Dorsolateral prefrontal cortex (tissue), 120 donors: ENCODE measurements at regions of chr9 and their contacts with region 1.

Region 1: GRCh38 chr9:85040821-85041465 is 371.4 kb downstream of the NTRK2 start:
- DNase-seq: peak; percentile 38 to 94 (median 85)
- H3K4me3 ChIP-seq: peak overlapping the region in 58 of 59 donors; percentile 2 to 64 (median 41)
- H3K27ac ChIP-seq: peak overlapping the region; percentile 86 to 100 (median 98)
- H3K27me3 ChIP-seq: no peaks in the 10 kb centered on the region
- CTCF ChIP-seq: peak in 24 of 56 donors; percentile 6 to 36 (median 18)

Region 2: GRCh38 chr9:84947363-84947972 is 93.5 kb before region 1 on chr9:
- intact Hi-C with region 1: loop called in 1 of 2 experiments (anchors 5 kb)
- DNase-seq: peak in 2 of 10 donors; percentile 40 to 48
- H3K4me3 ChIP-seq: no peak overlapping the region
- H3K27ac ChIP-seq: peak overlapping the region in 46 of 59 donors; percentile 1 to 82 (median 54)
- H3K27me3 ChIP-seq: no peaks in the 10 kb centered on the region
- CTCF ChIP-seq: no peak

Region 3: DNA sequence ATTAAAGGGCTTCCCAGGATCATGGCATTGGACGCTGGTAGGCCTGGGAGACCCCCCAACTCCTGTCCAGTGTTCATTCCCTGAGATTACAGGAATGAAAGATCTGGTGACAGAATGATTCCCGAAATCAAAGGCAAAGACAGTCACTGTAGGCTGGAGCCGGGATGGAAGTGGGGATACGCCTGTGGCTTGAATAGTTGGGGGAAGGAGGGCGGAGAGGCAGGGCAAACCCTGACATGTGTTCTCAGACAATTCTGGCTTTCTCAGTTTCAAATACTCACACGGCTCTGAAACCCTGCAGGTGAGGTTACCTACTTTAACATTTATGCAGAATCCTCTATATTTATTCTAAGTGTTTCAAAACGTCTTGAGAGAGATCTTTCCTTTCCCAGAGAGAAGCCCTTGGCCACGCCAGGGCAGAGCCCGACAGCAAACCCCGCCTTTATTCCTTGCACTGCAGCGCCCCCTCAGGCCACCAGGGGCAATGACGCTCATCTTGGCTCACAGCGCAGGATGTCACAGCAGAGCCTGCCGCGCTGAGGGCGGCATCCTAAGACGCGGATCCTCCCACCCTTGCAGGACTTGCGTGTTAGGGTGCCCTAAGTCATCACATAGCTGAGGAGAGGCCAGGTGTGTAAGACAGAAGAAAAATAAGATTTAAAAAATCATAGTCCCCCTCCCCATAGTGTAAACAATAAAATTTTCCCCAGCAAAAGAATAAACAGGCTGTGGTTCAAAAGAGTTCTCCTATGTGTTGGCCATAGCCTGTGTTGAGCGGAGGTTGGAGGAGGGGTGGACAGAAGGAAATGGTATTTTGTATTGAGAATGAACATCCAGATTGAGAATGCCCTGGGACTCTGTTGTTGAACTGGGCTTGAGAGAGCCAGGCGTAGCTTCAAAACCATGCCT is 86.9 kb before region 1 on chr9:
- intact Hi-C with region 1: loop called (anchors 5 kb)
- DNase-seq: peak; percentile 75 to 91 (median 86)
- H3K4me3 ChIP-seq: peak overlapping the region in 26 of 59 donors; percentile 1 to 50 (median 25)
- H3K27ac ChIP-seq: peak overlapping the region in 55 of 59 donors; percentile 6 to 88 (median 60)
- H3K27me3 ChIP-seq: no peaks in the 10 kb centered on the region
- CTCF ChIP-seq: peak; percentile 73 to 99 (median 96)

Region 4: GRCh38 chr9:84990102-84990815 is 50.7 kb before region 1 on chr9:
- intact Hi-C with region 1: loop called in 1 of 2 experiments (anchors 2 kb)
- DNase-seq: peak in 9 of 10 donors; percentile 46 to 87 (median 68)
- H3K4me3 ChIP-seq: peak overlapping the region in 11 of 59 donors; percentile 3 to 21 (median 11)
- H3K27ac ChIP-seq: peak overlapping the region; percentile 60 to 99 (median 93)
- H3K27me3 ChIP-seq: no peaks in the 10 kb centered on the region
- CTCF ChIP-seq: no peak

Region 5: GRCh38 chr9:85142968-85143367 is 102.0 kb after region 1 on chr9:
- intact Hi-C with region 1: loop called (anchors 5 kb)
- DNase-seq: no peak
- H3K4me3 ChIP-seq: no peak overlapping the region
- H3K27ac ChIP-seq: peak overlapping the region in 8 of 59 donors; percentile 2 to 55 (median 31)
- H3K27me3 ChIP-seq: no peaks in the 10 kb centered on the region
- CTCF ChIP-seq: peak; percentile 31 to 79 (median 63)

Region 6: DNA sequence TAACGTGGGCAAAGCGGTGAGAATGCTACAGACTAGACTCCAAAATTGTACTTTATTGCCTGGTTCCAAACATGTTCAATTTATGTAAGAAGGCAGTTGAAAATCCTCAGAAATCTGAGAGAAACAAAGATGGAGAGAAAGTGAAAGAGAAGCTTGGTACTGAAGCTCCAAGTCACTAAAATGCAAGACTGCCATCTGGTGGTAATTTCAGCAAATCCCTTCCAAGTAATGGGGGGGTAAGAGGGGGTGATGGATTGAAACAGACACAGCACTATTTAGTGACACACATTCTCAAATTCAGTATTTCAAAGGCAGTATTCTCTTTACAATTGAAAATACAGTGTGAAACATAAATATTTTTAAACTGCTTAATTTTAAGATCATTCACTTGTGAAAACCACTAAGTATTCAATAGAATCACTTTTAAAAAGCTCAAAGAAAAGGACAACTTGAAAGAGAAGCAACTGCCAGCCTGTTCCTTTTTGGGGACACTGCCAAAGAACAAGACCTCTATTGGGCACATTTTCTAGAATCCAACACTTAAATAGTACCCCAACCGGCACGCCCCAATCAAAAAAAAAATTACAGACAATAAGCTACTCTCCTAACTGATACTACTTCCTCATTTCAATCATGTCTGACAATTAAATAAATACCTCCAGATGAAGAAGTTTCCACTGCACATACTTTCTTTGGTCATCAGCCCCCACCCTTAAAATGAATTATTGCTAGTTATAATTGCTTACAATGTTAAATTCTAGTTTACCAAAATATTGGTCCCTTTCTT is 569.3 kb after region 1 on chr9:
- intact Hi-C with region 1: loop called in 1 of 2 experiments (anchors 5 kb)
- DNase-seq: peak in 2 of 10 donors; percentile 44 to 45
- H3K4me3 ChIP-seq: peak overlapping the region in 54 of 59 donors; percentile 4 to 55 (median 39)
- H3K27ac ChIP-seq: peak overlapping the region; percentile 61 to 98 (median 93)
- H3K27me3 ChIP-seq: no peaks in the 10 kb centered on the region
- CTCF ChIP-seq: peak; percentile 67 to 96 (median 87)